Dendritic cell treated with granulocyte-macrophage colony-stimulating factor and Interleukin-4, amounts not matched to agents 40 ng/mL and 50 ng/mL, for 4 days (primary cell): ENCODE measurements at regions of chr15 and their contacts with region 1.

Region 1: DNA sequence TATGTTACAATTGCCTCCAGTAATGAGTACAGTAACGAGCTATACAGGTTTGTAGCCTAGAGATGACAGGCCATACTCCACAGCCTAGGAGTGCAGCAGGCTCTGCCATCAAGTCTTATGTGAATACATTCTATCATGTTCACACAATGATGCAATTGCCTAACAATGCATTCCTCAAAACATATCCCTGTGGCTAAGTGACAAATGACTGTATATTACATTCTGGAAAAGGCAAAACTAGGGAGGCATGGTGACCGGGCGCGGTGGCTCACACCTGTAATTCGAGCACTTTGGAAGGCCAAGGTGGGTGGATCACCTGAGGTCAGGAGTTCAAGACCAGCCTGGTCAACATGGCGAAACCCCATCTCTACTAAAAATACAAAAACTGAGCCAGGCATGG is 192.4 kb upstream of the IGF1R start:
- H3K4me3 Mint-ChIP-seq: no peak overlapping the region
- H3K27ac Mint-ChIP-seq: no peak overlapping the region
- H3K4me1 Mint-ChIP-seq: no peaks in the 10 kb centered on the region
- H3K27me3 Mint-ChIP-seq: peaks cover 5% of the 10 kb centered on the region

Region 2: DNA sequence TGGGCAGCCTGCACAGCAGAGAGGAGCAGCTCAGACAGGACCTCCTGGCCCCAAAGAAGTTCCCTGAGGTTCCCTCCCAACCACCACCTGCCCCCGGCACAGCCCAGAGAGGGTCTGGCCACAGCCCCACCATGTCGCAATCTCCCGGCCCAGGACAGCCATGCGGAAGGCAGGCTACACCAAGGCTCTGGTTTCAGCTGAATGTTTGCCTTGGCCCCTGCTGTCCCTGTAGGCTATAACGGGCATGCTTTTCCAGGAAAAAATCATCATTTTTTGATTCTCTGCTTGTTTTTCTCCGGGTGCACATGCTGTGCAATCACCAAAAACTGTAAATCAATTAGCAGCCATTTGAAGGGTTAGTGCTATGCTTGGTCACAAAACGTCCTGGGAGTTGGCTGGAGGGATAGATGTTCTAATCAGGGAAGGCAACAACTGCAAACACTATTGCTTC is 49.6 kb after region 1 on chr15:
- intact Hi-C with region 1: loop called (anchors 5 kb)
- H3K4me3 Mint-ChIP-seq: no peak overlapping the region
- H3K27ac Mint-ChIP-seq: no peak overlapping the region
- H3K4me1 Mint-ChIP-seq: peaks cover 22% of the 10 kb centered on the region
- H3K27me3 Mint-ChIP-seq: no peaks in the 10 kb centered on the region